HepG2 (cell line): ENCODE measurements at regions of chr5 and their contacts with region 1.

Region 1: GRCh38 chr5:113663880-113664541 is 150.5 kb downstream of the YTHDC2 start:
- DNase-seq: peak; percentile 45
- ATAC-seq: peak; percentile 85
- H3K4me3 ChIP-seq: no peak overlapping the region
- H3K27ac ChIP-seq: no peak overlapping the region
- H3K4me1 ChIP-seq: no peaks in the 10 kb centered on the region
- H3K27me3 ChIP-seq: no peaks in the 10 kb centered on the region; a peak in 1 of 5 replicates
- CTCF ChIP-seq: peak; percentile 70
- EP300 ChIP-seq: no peak
- POLR2A ChIP-seq: no peak
- RAD21 ChIP-seq: no peak

Region 2: DNA sequence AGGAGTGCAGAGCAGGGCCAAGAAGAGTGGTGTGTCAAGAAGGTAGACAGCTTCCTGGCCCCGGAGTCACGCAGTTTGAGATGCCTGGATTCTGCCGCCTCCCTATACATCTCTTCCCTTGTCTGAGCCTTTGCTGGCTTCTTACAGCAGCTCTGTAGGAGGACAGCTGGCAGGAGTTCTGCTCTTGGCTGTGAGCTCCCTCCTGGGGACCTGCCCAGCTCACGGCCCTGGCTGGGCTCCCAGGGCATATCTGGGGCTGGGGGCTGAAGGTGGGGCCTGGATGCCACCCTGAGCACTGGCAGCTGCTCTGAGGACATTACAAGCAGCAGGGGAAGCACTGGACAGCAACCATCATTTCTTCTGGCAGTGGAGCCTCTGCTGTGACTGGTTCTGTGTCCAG is 228.4 kb before region 1 on chr5:
- CTCF ChIA-PET with region 1: no interaction called
- POLR2A ChIA-PET with region 1: no interaction called
- in situ Hi-C with region 1: no loop called
- intact Hi-C with region 1: no loop called
- DNase-seq: no peak
- ATAC-seq: no peak; the same call in 2 of the 3 replicates
- H3K4me3 ChIP-seq: no peak overlapping the region
- H3K27ac ChIP-seq: no peak overlapping the region
- H3K4me1 ChIP-seq: no peaks in the 10 kb centered on the region
- H3K27me3 ChIP-seq: peaks cover 0 to 4% of the 10 kb centered on the region in 2 experiments; a peak in 2 of 5 replicates
- CTCF ChIP-seq: no peak
- EP300 ChIP-seq: no peak
- POLR2A ChIP-seq: no peak
- RAD21 ChIP-seq: no peak

Region 3: GRCh38 chr5:113520429-113520828 is 143.6 kb before region 1 on chr5:
- CTCF ChIA-PET with region 1: no interaction called
- POLR2A ChIA-PET with region 1: no interaction called
- in situ Hi-C with region 1: no loop called
- intact Hi-C with region 1: no loop called
- DNase-seq: peak; percentile 58
- ATAC-seq: peak; percentile 80
- H3K4me3 ChIP-seq: no peak overlapping the region; a peak in 1 of 6 replicates
- H3K27ac ChIP-seq: no peak overlapping the region
- H3K4me1 ChIP-seq: peaks cover 34% of the 10 kb centered on the region
- H3K27me3 ChIP-seq: no peaks in the 10 kb centered on the region
- CTCF ChIP-seq: no peak
- EP300 ChIP-seq: peak in 1 of 2 experiments; percentile 23; a peak in 1 of 4 replicates
- POLR2A ChIP-seq: no peak
- RAD21 ChIP-seq: no peak

Region 4: GRCh38 chr5:113612060-113612496 is 51.9 kb before region 1 on chr5:
- CTCF ChIA-PET with region 1: interaction called, 6 read pairs
- POLR2A ChIA-PET with region 1: no interaction called
- in situ Hi-C with region 1: loop called (anchors 10 kb)
- intact Hi-C with region 1: loop called (anchors 1 kb)
- DNase-seq: peak; percentile 7
- ATAC-seq: peak; percentile 66
- H3K4me3 ChIP-seq: no peak overlapping the region
- H3K27ac ChIP-seq: no peak overlapping the region
- H3K4me1 ChIP-seq: no peaks in the 10 kb centered on the region
- H3K27me3 ChIP-seq: 0 out of 5 replicates have a peak, but pooled peaks cover 0 to 2% of the 10 kb centered on the region in 2 experiments
- CTCF ChIP-seq: peak; percentile 70
- EP300 ChIP-seq: no peak
- POLR2A ChIP-seq: no peak
- RAD21 ChIP-seq: no peak